Activated CD4-positive, alpha-beta memory T cell treated with anti-CD3 and anti-CD28 coated beads, Interleukin-2, amount 10 ng/mL, durations not matched to agents 7 days and 5 days (primary cell): ENCODE measurements at regions of chr3 and their contacts with region 1.

Region 1: DNA sequence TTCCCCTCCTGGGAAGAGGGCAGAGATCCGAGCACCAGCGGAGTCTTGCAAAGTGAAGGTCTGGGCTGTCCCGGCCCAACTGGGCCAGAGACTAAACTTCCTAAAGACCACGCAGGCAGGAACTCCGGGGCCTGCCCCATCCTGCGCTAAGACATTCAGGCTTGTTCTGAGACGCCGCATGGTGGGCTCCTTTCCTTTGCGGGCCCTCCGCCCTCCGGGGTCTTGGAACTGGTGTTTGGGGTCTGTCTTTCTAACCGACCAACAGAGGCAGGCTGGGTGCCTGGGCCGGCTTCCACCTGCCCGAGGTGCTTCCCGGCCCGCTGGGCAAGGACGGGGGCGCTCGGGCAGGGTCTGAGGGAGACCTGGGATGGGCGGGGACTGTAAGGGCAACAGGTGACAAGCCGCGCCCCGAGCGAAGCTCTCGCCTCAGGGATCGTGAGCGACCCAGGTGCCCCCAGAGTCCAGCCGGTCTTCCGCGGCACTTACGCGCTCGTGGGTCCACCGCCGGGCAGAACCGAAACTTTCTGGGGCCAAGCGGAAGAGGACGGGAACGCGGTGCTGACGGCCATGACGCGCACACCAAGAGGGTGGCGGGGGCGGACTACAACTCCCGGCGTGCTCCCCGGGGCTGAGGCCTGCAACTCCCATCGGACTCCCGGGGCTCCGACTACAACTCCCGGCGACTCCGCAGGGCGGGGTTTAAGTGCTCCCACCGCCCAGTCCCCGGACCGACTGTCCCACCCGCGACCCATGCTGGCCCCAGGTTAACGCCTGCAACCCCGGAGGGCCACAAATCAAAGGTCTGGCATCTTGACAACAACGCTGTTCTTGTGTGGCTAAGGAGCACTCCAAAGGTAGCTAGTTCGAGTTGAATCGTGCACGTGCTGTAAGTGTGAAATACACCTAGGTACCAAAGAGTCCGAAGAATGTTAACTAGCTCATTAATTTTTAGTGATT is at the start of gene FYCO1:
- DNase-seq: peak; percentile 91
- H3K4me3 Mint-ChIP-seq: peak within 1 kb of the TSS; percentile 84
- H3K27ac Mint-ChIP-seq: peak within 1 kb of the TSS; percentile 93
- H3K4me1 Mint-ChIP-seq: peaks cover 46% of the 10 kb centered on the region
- H3K27me3 Mint-ChIP-seq: peaks cover 8% of the 10 kb centered on the region
- total RNA-seq, gene FYCO1: 21.7 to 22.6 TPM

Region 2: GRCh38 chr3:45677033-45677433 is 318.5 kb before region 1 on chr3:
- CTCF ChIA-PET with region 1: no interaction called
- POLR2A ChIA-PET with region 1: no interaction called
- DNase-seq: peak; percentile 72
- H3K4me3 Mint-ChIP-seq: peak overlapping the region; percentile 55
- H3K27ac Mint-ChIP-seq: peak overlapping the region; percentile 89
- H3K4me1 Mint-ChIP-seq: peaks cover 29% of the 10 kb centered on the region
- H3K27me3 Mint-ChIP-seq: no peaks in the 10 kb centered on the region

Region 3: GRCh38 chr3:45948311-45948781 is 47.2 kb before region 1 on chr3:
- CTCF ChIA-PET with region 1: interaction called, 12 read pairs
- POLR2A ChIA-PET with region 1: interaction called, 80 read pairs
- DNase-seq: no peak
- H3K4me3 Mint-ChIP-seq: peak overlapping the region; percentile 58
- H3K27ac Mint-ChIP-seq: peak overlapping the region; percentile 90
- H3K4me1 Mint-ChIP-seq: peaks cover 92% of the 10 kb centered on the region
- H3K27me3 Mint-ChIP-seq: no peaks in the 10 kb centered on the region

Region 4: GRCh38 chr3:45964139-45964538 is 31.4 kb before region 1 on chr3:
- CTCF ChIA-PET with region 1: interaction called, 13 read pairs
- POLR2A ChIA-PET with region 1: interaction called, 119 read pairs
- DNase-seq: peak; percentile 62
- H3K4me3 Mint-ChIP-seq: no peak overlapping the region
- H3K27ac Mint-ChIP-seq: peak overlapping the region; percentile 83
- H3K4me1 Mint-ChIP-seq: peaks cover 80% of the 10 kb centered on the region
- H3K27me3 Mint-ChIP-seq: no peaks in the 10 kb centered on the region

Region 5: DNA sequence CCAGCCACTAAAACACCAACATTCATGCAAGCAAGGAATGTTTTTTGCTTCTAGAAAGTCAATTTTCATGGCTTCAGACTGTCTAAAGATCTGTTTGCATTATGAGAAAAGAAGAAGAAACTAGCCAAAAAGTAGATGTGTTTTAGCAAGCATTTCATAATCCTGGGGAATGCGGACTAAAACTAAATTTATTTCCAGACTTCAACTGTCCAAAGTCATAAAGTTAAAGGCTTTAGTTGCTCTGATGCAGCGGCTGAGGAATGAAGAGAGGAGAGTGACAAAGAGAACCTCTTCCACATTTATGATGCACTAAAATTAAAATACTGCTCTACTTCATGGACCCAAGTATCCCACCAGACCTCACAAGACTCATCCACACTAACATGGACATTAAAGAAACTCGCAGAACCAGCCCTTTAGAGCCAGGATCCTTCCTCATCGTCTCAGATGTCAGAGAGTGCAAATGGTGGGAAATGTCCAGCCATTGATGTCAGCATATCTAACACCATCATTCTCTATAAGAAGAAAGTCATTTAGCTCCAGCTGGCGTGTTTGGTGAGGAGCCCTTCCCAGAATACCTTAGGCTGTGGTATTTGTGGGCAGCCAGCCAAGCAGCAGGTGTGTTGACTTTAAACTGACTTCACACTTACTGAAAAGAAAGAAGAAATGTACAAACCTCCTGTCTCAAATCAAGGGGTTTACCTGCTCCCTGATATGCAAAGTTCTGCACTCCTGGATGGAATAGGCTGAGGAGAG is 17.3 kb before region 1 on chr3:
- CTCF ChIA-PET with region 1: interaction called, 8 read pairs
- POLR2A ChIA-PET with region 1: interaction called, 177 read pairs
- DNase-seq: peak; percentile 83
- H3K4me3 Mint-ChIP-seq: peak overlapping the region; percentile 50
- H3K27ac Mint-ChIP-seq: peak overlapping the region; percentile 97
- H3K4me1 Mint-ChIP-seq: peaks cover 84% of the 10 kb centered on the region
- H3K27me3 Mint-ChIP-seq: no peaks in the 10 kb centered on the region

Region 6: DNA sequence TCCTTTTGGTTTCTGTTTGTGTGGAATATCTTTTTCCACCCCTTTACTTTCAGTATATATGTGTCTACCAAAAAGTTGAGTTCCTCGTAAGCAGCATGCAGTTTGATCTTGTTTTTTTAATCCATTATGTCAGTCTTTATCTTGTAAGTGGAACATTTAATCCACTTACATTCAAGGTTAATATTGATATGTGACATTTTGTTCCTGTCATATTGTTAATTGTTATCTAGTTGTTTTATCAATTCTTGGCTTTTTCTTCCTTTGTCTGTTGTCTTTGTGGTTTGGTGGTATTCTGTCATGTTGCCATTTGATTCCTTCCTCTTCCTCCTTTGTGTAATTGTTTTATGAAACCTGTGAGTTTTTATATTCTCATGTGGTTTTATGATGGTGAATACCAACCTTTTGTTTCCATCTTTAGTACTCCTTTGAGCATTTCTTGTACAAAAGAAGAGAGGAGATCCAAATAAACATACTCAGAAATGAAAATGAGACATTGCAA is 75.1 kb after region 1 on chr3:
- CTCF ChIA-PET with region 1: interaction called, 4 read pairs
- POLR2A ChIA-PET with region 1: interaction called, 18 read pairs
- DNase-seq: no peak
- H3K4me3 Mint-ChIP-seq: peak overlapping the region; percentile 22
- H3K27ac Mint-ChIP-seq: peak overlapping the region; percentile 71
- H3K4me1 Mint-ChIP-seq: peaks cover 65% of the 10 kb centered on the region
- H3K27me3 Mint-ChIP-seq: peaks cover 49% of the 10 kb centered on the region